WTC11 (cell line): ENCODE measurements at regions of chr12 and their contacts with region 1.

Region 1: DNA sequence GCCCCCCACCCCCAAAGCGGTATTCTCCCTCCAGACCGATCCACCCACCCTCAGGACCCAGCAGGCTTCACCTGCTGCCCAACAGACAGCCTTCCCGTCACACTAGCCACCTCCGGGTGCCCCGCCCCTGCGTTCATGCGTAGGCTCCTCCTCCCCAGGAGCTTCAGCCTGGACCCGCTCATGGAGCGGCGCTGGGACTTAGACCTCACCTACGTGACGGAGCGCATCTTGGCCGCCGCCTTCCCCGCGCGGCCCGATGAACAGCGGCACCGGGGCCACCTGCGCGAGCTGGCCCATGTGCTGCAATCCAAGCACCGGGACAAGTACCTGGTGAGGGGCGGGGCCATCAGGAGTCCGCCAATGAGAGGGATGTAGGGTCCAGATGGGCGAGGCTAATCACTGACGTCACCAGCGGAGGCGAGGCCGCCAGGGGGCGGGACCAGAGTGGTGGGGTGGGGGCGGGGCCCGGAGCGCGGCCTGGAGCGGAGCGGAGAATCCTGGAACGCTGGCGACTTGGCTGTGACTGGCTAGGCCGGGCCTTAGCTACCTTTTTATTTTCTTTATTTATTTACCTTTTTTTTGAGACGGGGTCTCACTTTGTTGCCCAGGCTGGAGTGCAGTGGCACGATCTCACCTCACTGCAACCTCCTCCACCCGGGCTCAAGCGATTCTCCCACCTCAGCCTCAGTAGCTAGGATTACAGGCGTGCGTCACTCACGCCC is 4.4 kb downstream of the TNS2 start:
- DNase-seq: peak; percentile 97
- ATAC-seq: peak; percentile 75
- H3K4me3 Mint-ChIP-seq: peak overlapping the region; percentile 94
- H3K27ac Mint-ChIP-seq: peak overlapping the region; percentile 98
- H3K4me1 Mint-ChIP-seq: peaks cover 31% of the 10 kb centered on the region
- H3K27me3 Mint-ChIP-seq: peaks cover 40% of the 10 kb centered on the region
- CTCF ChIP-seq: no peak

Region 2: GRCh38 chr12:53005986-53006809 is 48.1 kb before region 1 on chr12 and contains the start of gene EIF4B:
- CTCF ChIA-PET with region 1: interaction called, 9 read pairs
- POLR2A ChIA-PET with region 1: interaction called, 10 read pairs
- DNase-seq: peak; percentile 100
- ATAC-seq: peak; percentile 90
- H3K4me3 Mint-ChIP-seq: peak within 1 kb of the TSS; percentile 99
- H3K27ac Mint-ChIP-seq: peak within 1 kb of the TSS; percentile 100
- H3K4me1 Mint-ChIP-seq: peaks cover 50% of the 10 kb centered on the region
- H3K27me3 Mint-ChIP-seq: no peaks in the 10 kb centered on the region
- CTCF ChIP-seq: no peak
- total RNA-seq, gene EIF4B: 730 to 860 TPM (median 838 TPM) in 3 replicates

Region 3: DNA sequence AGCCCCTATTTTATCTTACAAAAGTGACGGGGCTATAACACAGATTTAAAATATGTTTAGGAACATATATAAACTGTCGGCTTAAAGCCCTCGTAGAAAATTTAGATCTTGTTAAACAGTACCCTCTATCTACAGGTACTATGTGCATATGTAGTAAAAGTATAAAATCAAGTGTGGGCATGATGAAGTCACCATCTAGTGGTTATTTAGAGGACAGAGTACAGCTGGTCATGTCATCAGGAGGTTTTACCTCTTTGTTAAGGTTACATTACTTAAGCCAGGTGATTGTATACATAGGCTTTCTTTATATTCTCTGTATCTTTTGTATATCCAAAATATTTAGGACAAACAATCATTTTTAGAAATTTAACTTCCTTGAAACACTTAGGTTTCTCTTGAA is 22.7 kb before region 1 on chr12:
- CTCF ChIA-PET with region 1: no interaction called
- POLR2A ChIA-PET with region 1: no interaction called
- DNase-seq: no peak
- ATAC-seq: no peak
- H3K4me3 Mint-ChIP-seq: no peak overlapping the region
- H3K27ac Mint-ChIP-seq: no peak overlapping the region
- H3K4me1 Mint-ChIP-seq: no peaks in the 10 kb centered on the region
- H3K27me3 Mint-ChIP-seq: no peaks in the 10 kb centered on the region
- CTCF ChIP-seq: no peak

Region 4: DNA sequence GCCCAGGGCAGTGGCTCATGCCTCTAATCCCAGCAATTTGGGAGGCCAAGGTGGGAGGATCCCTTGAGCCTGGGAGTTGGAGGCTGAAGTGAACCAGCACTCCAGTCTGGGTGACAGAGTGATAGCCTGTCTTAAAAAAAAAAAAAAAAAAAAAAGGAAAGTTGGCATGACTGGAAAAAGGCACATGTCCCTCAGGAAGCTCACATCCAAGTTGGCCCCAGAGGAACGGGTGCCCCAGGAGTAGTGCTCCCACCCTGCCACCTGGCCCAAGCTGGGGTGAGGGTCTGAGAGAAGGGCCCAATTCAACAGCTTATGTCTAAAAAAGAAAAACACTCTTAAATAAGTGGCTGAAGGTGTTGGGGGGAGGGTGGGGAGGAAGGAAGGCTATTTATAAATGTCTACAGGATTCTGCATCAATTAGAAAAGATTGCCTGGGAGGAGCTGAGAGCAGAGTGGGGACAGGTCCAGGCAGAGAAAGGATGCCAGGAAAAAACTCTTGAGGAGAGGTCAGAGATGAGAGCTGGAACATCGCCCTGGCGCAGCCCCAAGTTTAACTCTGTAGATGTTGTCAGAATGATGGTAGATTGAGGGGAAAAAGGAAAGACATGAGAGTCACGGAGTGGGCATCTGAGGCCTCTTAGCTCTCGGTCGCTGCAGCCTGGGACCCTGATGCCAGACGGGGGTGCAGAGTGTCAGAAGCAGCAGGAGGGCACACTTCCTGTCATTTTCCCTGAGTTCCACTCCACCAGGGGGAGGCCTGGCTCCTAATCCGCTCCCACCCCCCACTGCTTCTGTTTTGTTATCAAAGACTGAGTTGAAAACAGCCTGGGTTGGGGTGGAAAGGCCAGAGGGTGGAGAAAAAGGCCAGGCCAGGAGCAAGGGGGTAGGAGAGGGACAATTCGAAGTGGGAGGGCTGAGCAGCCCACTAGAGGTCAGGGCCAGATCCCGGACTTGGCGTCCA is 17.6 kb after region 1 on chr12:
- CTCF ChIA-PET with region 1: interaction called, 151 read pairs
- POLR2A ChIA-PET with region 1: interaction called, 3 read pairs
- DNase-seq: no peak
- ATAC-seq: no peak
- H3K4me3 Mint-ChIP-seq: no peak overlapping the region
- H3K27ac Mint-ChIP-seq: no peak overlapping the region
- H3K4me1 Mint-ChIP-seq: peaks cover 28% of the 10 kb centered on the region
- H3K27me3 Mint-ChIP-seq: no peaks in the 10 kb centered on the region; the same call in none of the 2 replicates
- CTCF ChIP-seq: no peak

Region 5: GRCh38 chr12:53079226-53080117 is 25.2 kb after region 1 on chr12 and contains the start of gene SPRYD3:
- CTCF ChIA-PET with region 1: interaction called, 33 read pairs
- POLR2A ChIA-PET with region 1: interaction called, 3 read pairs
- DNase-seq: peak; percentile 98
- ATAC-seq: peak; percentile 95
- H3K4me3 Mint-ChIP-seq: peak within 1 kb of the TSS; percentile 85
- H3K27ac Mint-ChIP-seq: peak within 1 kb of the TSS; percentile 95
- H3K4me1 Mint-ChIP-seq: peaks cover 13% of the 10 kb centered on the region
- H3K27me3 Mint-ChIP-seq: peaks cover 43% of the 10 kb centered on the region
- CTCF ChIP-seq: no peak
- total RNA-seq, gene SPRYD3: 6.5 to 11.9 TPM (median 6.8 TPM) in 3 replicates

Region 6: GRCh38 chr12:53098982-53099651 is 44.8 kb after region 1 on chr12:
- CTCF ChIA-PET with region 1: interaction called, 474 read pairs
- POLR2A ChIA-PET with region 1: no interaction called
- DNase-seq: peak; percentile 92
- ATAC-seq: peak; percentile 16
- H3K4me3 Mint-ChIP-seq: peak overlapping the region; percentile 90
- H3K27ac Mint-ChIP-seq: no peak overlapping the region
- H3K4me1 Mint-ChIP-seq: peaks cover 30% of the 10 kb centered on the region
- H3K27me3 Mint-ChIP-seq: peaks cover 54% of the 10 kb centered on the region
- CTCF ChIP-seq: peak; percentile 96

Region 7: DNA sequence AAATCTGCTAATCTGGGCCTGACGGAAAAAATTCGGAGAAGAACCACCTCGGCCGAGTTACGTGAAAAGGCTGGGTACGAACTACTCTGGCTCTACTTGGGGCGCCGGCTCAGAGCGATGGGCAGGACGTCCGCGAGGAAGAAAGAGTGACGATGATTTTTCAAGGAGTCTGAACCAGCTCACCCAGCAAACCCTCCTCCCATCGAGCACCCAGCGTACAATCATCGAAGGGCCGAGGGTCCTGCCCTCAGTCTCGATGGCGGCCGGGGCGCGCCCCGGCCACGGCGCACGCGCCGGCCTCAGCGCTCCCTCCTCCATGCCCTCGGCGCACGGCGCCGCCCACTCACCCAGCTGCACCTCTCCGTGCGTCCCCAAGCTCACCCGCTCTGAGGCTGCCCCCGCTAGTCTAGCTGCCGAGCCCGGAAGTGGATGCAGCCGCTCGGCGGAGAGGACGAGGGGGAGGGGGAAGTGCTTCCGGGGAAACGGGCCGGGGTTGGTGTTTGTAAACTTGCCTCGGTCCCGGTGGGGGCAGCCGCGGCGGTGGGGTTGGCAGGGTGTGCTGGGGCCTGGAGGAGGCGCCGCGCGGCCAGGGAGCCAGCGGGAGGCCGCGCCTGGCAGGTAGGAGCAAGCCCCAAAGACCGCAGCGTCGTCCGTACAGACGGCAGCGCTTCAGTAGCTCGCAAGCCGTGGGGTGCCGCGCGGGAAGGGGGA is 126.1 kb after region 1 on chr12 and contains the starts of genes CSAD and ZNF740:
- CTCF ChIA-PET with region 1: interaction called, 11 read pairs
- POLR2A ChIA-PET with region 1: no interaction called
- DNase-seq: peak; percentile 96
- ATAC-seq: peak; percentile 97
- H3K4me3 Mint-ChIP-seq: peak within 1 kb of the TSS; percentile 91
- H3K27ac Mint-ChIP-seq: peak within 1 kb of the TSS; percentile 93
- H3K4me1 Mint-ChIP-seq: peaks cover 24% of the 10 kb centered on the region
- H3K27me3 Mint-ChIP-seq: peaks cover 48% of the 10 kb centered on the region
- CTCF ChIP-seq: no peak
- total RNA-seq, gene CSAD: 11.5 to 12.6 TPM (median 12.3 TPM) in 3 replicates
- total RNA-seq, gene ZNF740: 26.6 to 36.6 TPM (median 36.1 TPM) in 3 replicates

Region 8: DNA sequence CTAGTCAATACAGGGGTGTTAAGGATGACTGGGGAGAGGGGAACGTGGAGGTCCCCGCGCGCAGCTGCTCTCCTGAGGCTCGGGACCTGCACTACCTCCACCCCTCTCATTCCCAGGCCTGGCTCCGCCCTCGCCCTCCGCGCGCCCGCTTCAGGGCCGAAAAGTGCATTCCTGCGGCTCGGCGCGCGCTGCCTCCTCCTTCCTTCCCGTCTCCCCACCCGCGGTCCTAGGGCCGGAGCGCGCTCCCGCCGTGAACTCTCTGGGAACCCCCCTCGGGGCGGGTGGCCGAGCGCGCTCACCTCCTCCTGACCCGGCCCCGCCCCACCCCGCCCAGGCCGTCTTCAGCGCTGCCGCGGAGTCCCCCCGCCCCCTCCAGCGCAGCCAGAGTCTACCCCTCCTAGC is 166.5 kb after region 1 on chr12:
- CTCF ChIA-PET with region 1: interaction called, 11 read pairs
- POLR2A ChIA-PET with region 1: no interaction called
- DNase-seq: peak; percentile 94
- ATAC-seq: peak; percentile 38
- H3K4me3 Mint-ChIP-seq: peak overlapping the region; percentile 90
- H3K27ac Mint-ChIP-seq: peak overlapping the region; percentile 98
- H3K4me1 Mint-ChIP-seq: peaks cover 75% of the 10 kb centered on the region
- H3K27me3 Mint-ChIP-seq: peaks cover 7% of the 10 kb centered on the region; the same call in 1 of the 2 replicates
- CTCF ChIP-seq: no peak